Adrenal gland (tissue), 19 donors: ENCODE measurements at regions of chr2 and their contacts with region 1.

Region 1: DNA sequence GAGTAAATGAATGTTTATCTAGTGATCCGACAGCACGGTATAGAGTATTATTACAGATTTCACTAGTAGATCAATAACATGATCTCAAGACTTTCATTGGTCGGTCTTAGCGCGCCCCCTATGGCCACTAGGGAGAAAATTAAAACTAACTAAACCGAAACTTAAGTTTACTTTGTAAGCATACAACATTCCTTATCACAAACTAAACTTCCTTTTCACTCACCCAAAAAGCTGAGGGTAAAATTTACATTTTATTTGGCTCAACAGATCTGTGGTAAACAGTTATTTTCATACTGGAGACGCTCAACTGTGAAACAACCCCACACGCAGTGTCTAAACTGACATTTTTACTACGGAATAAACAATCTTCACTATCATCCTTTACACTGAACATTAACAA is 215.6 kb upstream of the MAP2 start:
- DNase-seq: peak in 6 of 7 donors; percentile 26 to 60 (median 52)
- H3K4me3 ChIP-seq: peak overlapping the region in 2 of 4 donors; percentile 10 to 43
- H3K27ac ChIP-seq: no peak overlapping the region
- H3K4me1 ChIP-seq: no peaks in the 10 kb centered on the region
- H3K27me3 ChIP-seq: no peaks in the 10 kb centered on the region
- CTCF ChIP-seq: peak; percentile 53 to 77 (median 70)
- POLR2A ChIP-seq: no peak

Region 2: GRCh38 chr2:208373460-208374089 is 834.6 kb before region 1 on chr2:
- intact Hi-C with region 1: loop called in 1 of 2 experiments (anchors 10 kb)
- DNase-seq: peak; percentile 28 to 73 (median 53)
- H3K4me3 ChIP-seq: no peak overlapping the region
- H3K27ac ChIP-seq: no peak overlapping the region
- H3K4me1 ChIP-seq: no peaks in the 10 kb centered on the region
- H3K27me3 ChIP-seq: no peaks in the 10 kb centered on the region
- CTCF ChIP-seq: peak; percentile 62 to 88 (median 69)
- POLR2A ChIP-seq: no peak